AG04450 (cell line): ENCODE measurements at regions of chr14 and their contacts with region 1.

Region 1: DNA sequence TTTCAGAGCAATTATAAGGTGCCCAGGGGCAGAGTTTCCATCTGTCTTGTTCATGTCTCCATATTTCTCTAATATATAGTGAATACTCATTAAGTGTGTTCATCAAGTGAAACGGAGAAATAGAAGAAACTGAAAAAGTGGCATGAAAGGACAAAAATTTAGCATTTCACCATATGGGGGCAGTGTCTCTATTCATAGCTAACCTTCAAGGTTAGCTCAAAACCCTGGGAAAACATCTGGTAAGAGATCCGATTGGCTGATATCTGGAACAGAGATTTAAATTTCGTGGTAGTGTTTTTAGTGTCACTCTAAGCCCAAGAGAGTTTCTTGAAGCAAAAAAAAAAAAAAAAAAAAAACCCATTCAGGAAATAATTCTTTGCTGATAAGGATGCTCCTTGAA is 367.5 kb downstream of the DAD1 start:
- DNase-seq: no peak
- H3K4me3 ChIP-seq: no peak overlapping the region
- H3K27ac ChIP-seq: no peak overlapping the region
- H3K27me3 ChIP-seq: no peaks in the 10 kb centered on the region
- CTCF ChIP-seq: peak; percentile 59

Region 2: DNA sequence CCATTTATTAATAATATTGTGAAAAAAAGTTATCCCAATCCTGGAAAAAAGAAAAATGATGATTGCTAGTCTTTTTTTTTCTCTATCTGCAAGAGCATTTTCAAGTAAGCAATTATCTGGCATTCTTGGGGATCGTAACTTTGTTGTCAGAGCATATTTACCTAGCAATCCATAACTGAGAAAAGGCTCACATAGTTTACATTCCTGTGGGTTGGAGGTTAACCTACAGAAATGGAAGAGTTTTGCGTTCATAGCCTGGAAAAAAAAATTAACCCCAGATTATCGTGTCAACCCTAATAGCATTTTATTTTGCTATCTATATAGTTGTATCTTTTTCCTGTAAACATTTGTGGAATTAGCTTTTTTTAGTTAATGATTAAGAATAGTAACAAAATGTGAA is 75.2 kb after region 1 on chr14:
- CTCF ChIA-PET with region 1: interaction called, 18 read pairs
- POLR2A ChIA-PET with region 1: no interaction called
- DNase-seq: peak; percentile 65
- H3K4me3 ChIP-seq: no peak overlapping the region
- H3K27ac ChIP-seq: no peak overlapping the region
- H3K27me3 ChIP-seq: no peaks in the 10 kb centered on the region
- CTCF ChIP-seq: no peak

Region 3: DNA sequence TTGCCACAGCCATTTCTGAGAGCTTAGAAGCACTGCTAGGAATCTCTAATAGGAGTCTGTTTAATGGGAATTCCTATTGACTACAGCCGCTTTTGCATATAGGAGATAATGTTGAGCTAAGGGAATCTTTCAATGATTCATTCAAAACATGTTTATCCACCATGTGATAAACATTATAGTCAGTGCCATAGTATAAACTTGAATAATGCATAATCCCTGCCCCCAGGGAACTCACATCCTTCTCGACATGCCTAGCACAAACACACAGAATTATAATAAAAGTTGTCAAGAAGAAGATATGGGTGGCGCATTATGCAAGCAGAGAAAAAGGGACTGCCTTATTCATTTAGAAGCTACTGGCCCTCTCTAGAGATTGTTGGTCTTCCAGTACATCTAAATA is 119.5 kb after region 1 on chr14:
- CTCF ChIA-PET with region 1: interaction called, 11 read pairs
- POLR2A ChIA-PET with region 1: no interaction called
- DNase-seq: no peak
- H3K4me3 ChIP-seq: no peak overlapping the region
- H3K27ac ChIP-seq: no peak overlapping the region
- H3K27me3 ChIP-seq: peaks cover 3% of the 10 kb centered on the region
- CTCF ChIP-seq: no peak

Region 4: GRCh38 chr14:22854963-22855724 is 633.6 kb after region 1 on chr14:
- CTCF ChIA-PET with region 1: no interaction called
- POLR2A ChIA-PET with region 1: no interaction called
- DNase-seq: no peak
- H3K4me3 ChIP-seq: no peak overlapping the region
- H3K27ac ChIP-seq: no peak overlapping the region
- H3K27me3 ChIP-seq: no peaks in the 10 kb centered on the region
- CTCF ChIP-seq: no peak